ENCODE measurements at regions of chr3 and their contacts with region 1.

Region 1: GRCh38 chr3:194141415-194142155 is 5.6 kb downstream of the HES1 start:
- DNase-seq: peak; percentile 92 to 96 (median 93)
- H3K4me3 ChIP-seq: peak overlapping the region in 1 of 4 donors; percentile 52
- H3K27ac ChIP-seq: peak overlapping the region; percentile 90 to 98 (median 97)
- H3K4me1 ChIP-seq: peaks cover 13 to 49% of the 10 kb centered on the region in 2 donors
- H3K27me3 ChIP-seq: no peaks in the 10 kb centered on the region
- CTCF ChIP-seq: peak in 1 of 6 experiments; percentile 23
- POLR2A ChIP-seq: peak in 1 of 2 donors; percentile 66

Region 2: GRCh38 chr3:193776626-193777358 is 364.8 kb before region 1 on chr3:
- intact Hi-C with region 1: no loop called
- DNase-seq: no peak
- H3K4me3 ChIP-seq: no peak overlapping the region
- H3K27ac ChIP-seq: no peak overlapping the region
- H3K4me1 ChIP-seq: peaks cover 0 to 2% of the 10 kb centered on the region in 2 donors
- H3K27me3 ChIP-seq: peaks cover 20% of the 10 kb centered on the region
- CTCF ChIP-seq: no peak
- POLR2A ChIP-seq: no peak

Region 3: DNA sequence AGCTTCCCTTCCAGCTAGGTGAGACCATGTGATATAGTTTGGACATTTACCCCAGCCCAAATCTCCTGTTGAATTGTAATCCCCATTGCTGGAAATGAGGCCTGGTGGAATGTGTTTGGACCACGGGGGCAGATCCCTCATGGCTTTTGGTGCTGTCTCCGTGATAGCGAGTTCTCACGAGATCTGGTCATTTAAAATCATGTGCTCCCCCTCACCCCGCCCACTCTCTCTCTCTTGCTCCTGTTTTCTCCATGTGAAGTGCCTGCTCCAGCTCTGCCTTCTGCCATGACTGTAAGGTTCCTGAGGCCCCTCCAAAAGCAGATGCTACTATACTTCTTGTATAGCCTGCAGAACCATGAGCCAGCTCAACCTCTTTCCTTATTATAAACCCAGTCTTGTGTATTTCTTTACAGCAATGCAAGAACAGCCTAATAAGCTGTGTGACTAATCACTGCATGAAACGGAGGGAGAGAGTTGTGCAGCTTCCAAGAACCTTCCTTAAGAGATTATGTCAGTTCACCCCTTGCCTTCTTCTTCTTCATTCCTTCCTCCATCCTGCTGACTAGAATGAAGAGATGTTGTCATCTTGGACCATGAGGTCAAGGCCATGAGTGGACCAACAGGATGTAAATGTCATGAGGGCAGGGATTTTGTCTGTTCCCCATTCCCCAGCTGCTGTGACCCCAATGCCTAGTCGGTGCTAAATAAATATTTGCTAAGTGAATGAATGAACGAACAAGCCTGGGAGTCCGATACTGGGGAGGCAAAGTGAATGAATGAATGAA is 118.6 kb after region 1 on chr3:
- intact Hi-C with region 1: loop called (anchors 5 kb)
- DNase-seq: peak in 2 of 7 donors; percentile 23 to 53
- H3K4me3 ChIP-seq: no peak overlapping the region
- H3K27ac ChIP-seq: peak overlapping the region in 1 of 5 donors; percentile 7
- H3K4me1 ChIP-seq: peaks cover 0 to 7% of the 10 kb centered on the region in 2 donors
- H3K27me3 ChIP-seq: no peaks in the 10 kb centered on the region
- CTCF ChIP-seq: no peak
- POLR2A ChIP-seq: no peak

Region 4: GRCh38 chr3:194265483-194265892 is 123.9 kb after region 1 on chr3:
- intact Hi-C with region 1: loop called (anchors 5 kb)
- DNase-seq: peak; percentile 67 to 93 (median 87)
- H3K4me3 ChIP-seq: no peak overlapping the region
- H3K27ac ChIP-seq: peak overlapping the region in 4 of 5 donors; percentile 50 to 89 (median 66)
- H3K4me1 ChIP-seq: peaks cover 20 to 41% of the 10 kb centered on the region in 2 donors
- H3K27me3 ChIP-seq: no peaks in the 10 kb centered on the region
- CTCF ChIP-seq: no peak
- POLR2A ChIP-seq: peak in 1 of 2 donors; percentile 43